CD14-positive monocyte (primary cell): ENCODE measurements at regions of chr11 and their contacts with region 1.

Region 1: DNA sequence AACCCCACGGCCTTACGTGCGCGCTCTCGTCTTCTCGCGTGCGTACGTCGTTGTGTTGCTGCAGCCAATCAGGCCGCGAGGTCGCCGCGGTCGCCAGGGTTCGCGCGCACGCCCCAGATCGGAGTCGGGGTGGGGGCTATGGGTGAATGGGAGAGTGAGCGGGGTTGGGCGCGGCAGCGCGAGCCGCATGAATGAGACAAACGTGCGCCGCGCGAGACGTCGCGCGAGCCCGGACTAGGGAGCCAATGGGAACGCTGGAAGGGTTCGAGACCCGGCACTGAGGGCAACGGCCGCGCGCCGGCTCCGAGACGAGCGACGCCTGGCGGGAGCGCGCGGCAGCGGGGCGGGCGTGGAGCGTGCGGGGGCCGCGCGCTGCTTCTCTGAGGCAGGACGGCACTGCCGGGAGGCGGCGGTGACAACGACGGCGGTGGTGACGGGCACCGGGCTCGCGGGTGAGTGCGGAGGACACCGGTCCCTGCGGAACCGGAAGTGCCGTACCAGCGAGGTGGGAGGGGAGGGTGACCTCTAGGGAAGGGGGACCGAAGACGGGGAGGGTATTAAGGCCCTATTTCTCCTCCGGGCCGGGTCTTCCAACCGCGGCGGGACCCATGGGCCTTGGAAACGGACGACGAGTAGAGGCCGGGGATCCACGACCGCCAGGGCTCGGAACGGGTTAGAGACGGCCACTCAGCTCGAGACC is at the start of gene ZDHHC5:
- DNase-seq: peak; percentile 95 to 100 (median 100)
- H3K4me3 ChIP-seq: peak within 1 kb of the TSS; percentile 74 to 99 (median 90)
- H3K4me3 Mint-ChIP-seq: peak within 1 kb of the TSS; percentile 96 to 97
- H3K27ac ChIP-seq: peak within 1 kb of the TSS; percentile 98 to 99
- H3K27ac Mint-ChIP-seq: peak within 1 kb of the TSS; percentile 99 to 100 (median 100)
- H3K4me1 ChIP-seq: peaks cover 22 to 28% of the 10 kb centered on the region in 2 donors
- H3K4me1 Mint-ChIP-seq: peaks cover 28% of the 10 kb centered on the region
- H3K27me3 ChIP-seq: no peaks in the 10 kb centered on the region
- H3K27me3 Mint-ChIP-seq: no peaks in the 10 kb centered on the region
- CTCF ChIP-seq: peak; percentile 53
- polyA plus RNA-seq, gene ZDHHC5: 28.6 to 37.9 (median 31.8) TPM

Region 2: GRCh38 chr11:57567515-57568329 is 100.2 kb before region 1 on chr11 and contains the start of gene UBE2L6:
- intact Hi-C with region 1: loop called in 1 of 2 experiments (anchors 5 kb)
- DNase-seq: peak in 1 of 3 donors; percentile 15
- H3K4me3 ChIP-seq: peak within 1 kb of the TSS; percentile 69 to 100 (median 98)
- H3K4me3 Mint-ChIP-seq: peak within 1 kb of the TSS; percentile 97 to 98
- H3K27ac ChIP-seq: peak within 1 kb of the TSS; percentile 63 to 93
- H3K27ac Mint-ChIP-seq: peak within 1 kb of the TSS; percentile 84 to 95 (median 93)
- H3K4me1 ChIP-seq: peaks cover 42 to 58% of the 10 kb centered on the region in 2 donors
- H3K4me1 Mint-ChIP-seq: peaks cover 56% of the 10 kb centered on the region
- H3K27me3 ChIP-seq: no peaks in the 10 kb centered on the region
- H3K27me3 Mint-ChIP-seq: peaks cover 0 to 2% (median 0%) of the 10 kb centered on the region in 3 donors
- CTCF ChIP-seq: peak; percentile 98
- polyA plus RNA-seq, gene UBE2L6: 101 to 284 (median 268) TPM

Region 3: DNA sequence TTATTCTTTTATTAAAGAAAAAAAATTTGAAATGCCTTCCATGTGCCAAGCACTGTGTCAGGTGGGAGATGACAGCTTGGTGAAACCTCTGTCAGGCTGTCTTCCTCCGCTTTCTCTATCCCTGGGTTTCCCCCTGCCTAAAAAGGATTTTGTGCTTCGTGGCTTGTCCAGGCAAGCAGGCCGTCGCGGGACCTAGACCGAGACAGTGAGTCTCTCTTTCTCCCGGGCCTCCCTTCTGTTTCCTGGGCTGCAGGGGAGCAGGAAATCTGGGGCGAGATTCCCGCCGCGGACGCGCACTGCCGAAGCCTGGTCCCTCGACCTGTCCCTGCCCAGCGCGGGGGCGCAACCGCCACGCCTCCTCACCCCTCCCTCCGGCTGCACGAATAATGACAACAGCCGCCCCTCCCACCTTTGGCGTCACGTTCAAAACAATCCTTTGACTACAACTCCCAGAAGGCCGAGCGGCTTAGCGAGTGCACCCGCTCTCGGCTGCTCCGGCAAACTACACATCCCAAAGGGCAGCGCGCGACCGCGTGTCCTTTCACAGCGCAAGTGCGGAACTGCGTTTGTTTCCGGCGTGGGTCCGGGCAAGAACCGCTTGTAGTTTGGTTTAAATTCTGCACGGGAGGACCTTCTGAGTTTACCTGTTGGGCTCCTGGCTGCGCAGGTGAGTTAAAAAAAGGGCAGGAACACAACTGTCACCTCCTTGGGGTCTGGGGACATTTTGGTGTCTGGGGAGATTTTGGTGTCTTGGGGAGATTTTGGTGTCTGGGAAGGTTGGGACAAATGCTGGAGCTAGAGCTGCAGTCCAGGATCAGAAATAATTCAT is 10.5 kb before region 1 on chr11 and contains the start of gene CLP1:
- intact Hi-C with region 1: loop called (anchors 1 to 2 kb)
- DNase-seq: peak; percentile 97 to 98 (median 97)
- H3K4me3 ChIP-seq: peak within 1 kb of the TSS; percentile 70 to 98 (median 89)
- H3K4me3 Mint-ChIP-seq: peak within 1 kb of the TSS; percentile 86 to 99
- H3K27ac ChIP-seq: peak within 1 kb of the TSS; percentile 61 to 88
- H3K27ac Mint-ChIP-seq: peak within 1 kb of the TSS; percentile 91 to 97 (median 95)
- H3K4me1 ChIP-seq: peaks cover 35 to 39% of the 10 kb centered on the region in 2 donors
- H3K4me1 Mint-ChIP-seq: peaks cover 27% of the 10 kb centered on the region
- H3K27me3 ChIP-seq: no peaks in the 10 kb centered on the region
- H3K27me3 Mint-ChIP-seq: peaks cover 0 to 3% (median 0%) of the 10 kb centered on the region in 3 donors
- CTCF ChIP-seq: no peak
- polyA plus RNA-seq, gene CLP1: 7.6 to 17.9 (median 12.9) TPM

Region 4: DNA sequence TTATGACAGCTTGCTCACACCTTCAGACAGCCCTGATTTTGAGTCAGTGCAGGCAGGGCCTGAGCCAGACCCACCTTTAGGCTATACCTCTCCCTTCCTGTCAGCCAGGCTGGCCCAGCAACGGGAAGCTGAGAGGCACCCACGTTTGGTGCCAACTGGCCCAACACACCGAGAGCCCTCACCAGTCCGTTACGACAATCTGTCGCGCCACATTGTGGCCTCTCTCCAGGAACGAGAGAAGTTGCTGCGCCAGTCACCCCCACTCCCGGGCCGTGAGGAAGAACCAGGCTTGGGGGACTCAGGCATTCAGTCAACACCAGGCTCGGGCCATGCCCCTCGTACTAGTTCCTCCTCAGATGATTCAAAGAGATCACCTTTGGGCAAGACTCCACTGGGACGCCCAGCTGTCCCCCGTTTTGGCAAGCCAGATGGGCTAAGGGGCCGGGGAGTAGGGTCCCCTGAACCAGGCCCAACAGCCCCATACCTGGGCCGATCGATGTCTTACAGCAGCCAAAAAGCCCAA is 31.0 kb after region 1 on chr11:
- intact Hi-C with region 1: no loop called
- DNase-seq: no peak
- H3K4me3 ChIP-seq: no peak overlapping the region
- H3K4me3 Mint-ChIP-seq: no peak overlapping the region
- H3K27ac ChIP-seq: no peak overlapping the region
- H3K27ac Mint-ChIP-seq: peak overlapping the region in 1 of 7 donors; percentile 4
- H3K4me1 ChIP-seq: no peaks in the 10 kb centered on the region
- H3K4me1 Mint-ChIP-seq: no peaks in the 10 kb centered on the region
- H3K27me3 ChIP-seq: no peaks in the 10 kb centered on the region
- H3K27me3 Mint-ChIP-seq: peaks cover 0 to 2% (median 0%) of the 10 kb centered on the region in 3 donors
- CTCF ChIP-seq: no peak

Region 5: GRCh38 chr11:57712256-57713150 is 44.6 kb after region 1 on chr11 and contains the start of gene TMX2:
- intact Hi-C with region 1: loop called (anchors 2 kb)
- DNase-seq: peak; percentile 96 to 99 (median 98)
- H3K4me3 ChIP-seq: peak within 1 kb of the TSS; percentile 72 to 100 (median 96)
- H3K4me3 Mint-ChIP-seq: peak within 1 kb of the TSS; percentile 98
- H3K27ac ChIP-seq: peak within 1 kb of the TSS; percentile 72 to 97
- H3K27ac Mint-ChIP-seq: peak within 1 kb of the TSS; percentile 95 to 99 (median 98)
- H3K4me1 ChIP-seq: peaks cover 22 to 31% of the 10 kb centered on the region in 2 donors
- H3K4me1 Mint-ChIP-seq: peaks cover 32% of the 10 kb centered on the region
- H3K27me3 ChIP-seq: no peaks in the 10 kb centered on the region
- H3K27me3 Mint-ChIP-seq: peaks cover 0 to 2% (median 2%) of the 10 kb centered on the region in 3 donors
- CTCF ChIP-seq: no peak
- polyA plus RNA-seq, gene TMX2: 28.9 to 71.6 (median 52.9) TPM

Region 6: DNA sequence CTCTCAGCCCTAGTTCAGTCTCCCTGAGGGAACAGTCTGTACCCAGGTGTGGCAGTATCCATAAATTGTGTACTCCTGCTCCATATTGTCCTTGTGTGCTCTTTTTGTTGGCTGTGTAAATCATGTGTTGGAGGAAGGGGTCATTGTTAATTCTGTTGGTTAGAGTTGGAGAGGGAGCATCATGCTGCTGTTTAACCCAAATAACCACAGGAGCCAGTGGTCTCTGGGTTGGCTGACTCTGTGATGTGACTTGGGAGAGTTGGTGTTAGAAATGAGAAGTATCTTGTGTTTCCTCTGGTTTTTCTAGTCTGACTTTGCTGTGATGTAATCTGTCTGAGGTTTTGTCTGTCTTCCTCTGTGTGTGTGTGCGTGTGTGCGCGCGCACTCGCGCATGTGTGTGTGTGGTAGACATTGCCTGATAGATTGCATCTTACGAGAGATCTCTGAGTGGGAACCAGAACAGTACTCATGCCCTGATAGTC is 124.2 kb after region 1 on chr11:
- intact Hi-C with region 1: loop called in 1 of 2 experiments (anchors 2 kb)
- DNase-seq: peak; percentile 98 to 99 (median 99)
- H3K4me3 ChIP-seq: peak overlapping the region; percentile 25 to 66 (median 26)
- H3K4me3 Mint-ChIP-seq: peak overlapping the region in 1 of 2 donors; percentile 89
- H3K27ac ChIP-seq: peak overlapping the region; percentile 87 to 94
- H3K27ac Mint-ChIP-seq: peak overlapping the region; percentile 97 to 99 (median 98)
- H3K4me1 ChIP-seq: peaks cover 53 to 71% of the 10 kb centered on the region in 2 donors
- H3K4me1 Mint-ChIP-seq: peaks cover 63% of the 10 kb centered on the region
- H3K27me3 ChIP-seq: no peaks in the 10 kb centered on the region
- H3K27me3 Mint-ChIP-seq: peaks cover 0 to 3% (median 3%) of the 10 kb centered on the region in 3 donors
- CTCF ChIP-seq: no peak

Region 7: DNA sequence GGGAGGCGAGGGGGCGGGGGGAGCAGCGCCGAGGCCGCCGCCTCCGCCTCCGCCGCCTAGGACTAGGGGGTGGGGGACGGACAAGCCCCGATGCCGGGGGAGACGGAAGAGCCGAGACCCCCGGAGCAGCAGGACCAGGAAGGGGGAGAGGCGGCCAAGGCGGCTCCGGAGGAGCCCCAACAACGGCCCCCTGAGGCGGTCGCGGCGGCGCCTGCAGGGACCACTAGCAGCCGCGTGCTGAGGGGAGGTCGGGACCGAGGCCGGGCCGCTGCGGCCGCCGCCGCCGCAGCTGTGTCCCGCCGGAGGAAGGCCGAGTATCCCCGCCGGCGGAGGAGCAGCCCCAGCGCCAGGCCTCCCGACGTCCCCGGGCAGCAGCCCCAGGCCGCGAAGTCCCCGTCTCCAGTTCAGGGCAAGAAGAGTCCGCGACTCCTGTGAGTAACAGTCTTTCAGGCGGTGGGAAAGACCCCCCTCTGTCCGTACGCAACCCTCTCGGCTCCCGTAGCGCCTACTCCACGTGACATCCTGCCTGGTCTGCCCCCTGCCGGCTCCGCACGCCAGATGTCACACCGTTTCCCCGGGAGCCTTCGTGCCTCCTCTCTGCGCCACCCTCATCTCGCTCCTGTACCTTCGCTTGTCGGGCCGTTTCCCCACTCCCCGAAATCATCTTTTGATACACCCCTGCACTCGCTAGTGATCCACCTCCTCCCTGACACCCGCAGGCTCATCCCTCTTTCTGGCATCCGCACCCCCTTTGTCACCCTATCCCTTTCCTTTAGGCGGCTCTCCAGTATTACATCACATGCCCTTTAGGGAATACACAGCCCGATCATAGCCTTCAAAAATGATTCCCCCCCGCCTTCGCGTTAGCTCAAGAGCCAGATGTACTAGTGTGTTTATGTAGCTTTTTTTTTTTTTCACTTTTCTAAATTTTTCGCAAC is 911.6 kb after region 1 on chr11:
- intact Hi-C with region 1: loop called in 1 of 2 experiments (anchors 10 kb)
- DNase-seq: peak; percentile 87 to 98 (median 91)
- H3K4me3 ChIP-seq: peak overlapping the region; percentile 68 to 89 (median 75)
- H3K4me3 Mint-ChIP-seq: peak overlapping the region; percentile 98 to 100
- H3K27ac ChIP-seq: peak overlapping the region; percentile 97 to 100
- H3K27ac Mint-ChIP-seq: peak overlapping the region; percentile 100
- H3K4me1 ChIP-seq: peaks cover 54 to 68% of the 10 kb centered on the region in 2 donors
- H3K4me1 Mint-ChIP-seq: peaks cover 62% of the 10 kb centered on the region
- H3K27me3 ChIP-seq: no peaks in the 10 kb centered on the region
- H3K27me3 Mint-ChIP-seq: peaks cover 0 to 2% (median 0%) of the 10 kb centered on the region in 3 donors
- CTCF ChIP-seq: peak; percentile 90